ENCODE measurements at regions of chr10 and their contacts with region 1.

Region 1: GRCh38 chr10:47311932-47312662 is 10.2 kb upstream of the GDF2 start:
- DNase-seq: peak; percentile 93
- H3K4me3 Mint-ChIP-seq: no peak overlapping the region
- H3K27ac Mint-ChIP-seq: peak overlapping the region; percentile 41
- H3K4me1 Mint-ChIP-seq: peaks cover 32% of the 10 kb centered on the region
- H3K27me3 Mint-ChIP-seq: no peaks in the 10 kb centered on the region

Region 2: GRCh38 chr10:47031211-47031900 is 280.7 kb before region 1 on chr10:
- CTCF ChIA-PET with region 1: interaction called, 72 read pairs
- intact Hi-C with region 1: no loop called
- DNase-seq: no peak
- H3K4me3 Mint-ChIP-seq: no peak overlapping the region
- H3K27ac Mint-ChIP-seq: no peak overlapping the region
- H3K4me1 Mint-ChIP-seq: no peaks in the 10 kb centered on the region
- H3K27me3 Mint-ChIP-seq: no peaks in the 10 kb centered on the region

Region 3: DNA sequence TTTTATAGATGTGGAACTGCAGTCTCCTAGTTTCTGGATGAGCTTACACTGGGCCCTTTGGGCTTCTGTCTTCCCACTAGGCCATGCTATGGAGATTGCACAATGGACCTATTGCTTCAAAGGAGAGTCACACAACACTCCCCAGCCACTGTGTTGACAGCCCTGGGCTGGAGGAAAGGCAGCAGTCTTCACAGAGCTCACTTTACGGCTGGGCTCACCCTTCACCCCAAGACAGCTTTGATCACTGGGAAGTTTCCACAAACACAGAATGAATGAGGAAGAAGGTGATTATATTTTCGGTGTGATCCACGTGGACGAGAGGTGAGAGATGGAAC is 104.8 kb before region 1 on chr10:
- CTCF ChIA-PET with region 1: interaction called, 4 read pairs
- intact Hi-C with region 1: loop called (anchors 5 kb)
- DNase-seq: peak; percentile 44
- H3K4me3 Mint-ChIP-seq: peak overlapping the region; percentile 36
- H3K27ac Mint-ChIP-seq: peak overlapping the region; percentile 85
- H3K4me1 Mint-ChIP-seq: peaks cover 53% of the 10 kb centered on the region
- H3K27me3 Mint-ChIP-seq: no peaks in the 10 kb centered on the region

Region 4: GRCh38 chr10:47299611-47300428 is 12.3 kb before region 1 on chr10 and contains the start of gene GDF10:
- CTCF ChIA-PET with region 1: interaction called, 20 read pairs
- intact Hi-C with region 1: no loop called
- DNase-seq: no peak
- H3K4me3 Mint-ChIP-seq: peak within 1 kb of the TSS; percentile 66
- H3K27ac Mint-ChIP-seq: no peak within 1 kb of the TSS
- H3K4me1 Mint-ChIP-seq: peaks cover 12% of the 10 kb centered on the region
- H3K27me3 Mint-ChIP-seq: peaks cover 9% of the 10 kb centered on the region
- total RNA-seq, gene GDF10: 0.12 to 0.19 TPM

Region 5: DNA sequence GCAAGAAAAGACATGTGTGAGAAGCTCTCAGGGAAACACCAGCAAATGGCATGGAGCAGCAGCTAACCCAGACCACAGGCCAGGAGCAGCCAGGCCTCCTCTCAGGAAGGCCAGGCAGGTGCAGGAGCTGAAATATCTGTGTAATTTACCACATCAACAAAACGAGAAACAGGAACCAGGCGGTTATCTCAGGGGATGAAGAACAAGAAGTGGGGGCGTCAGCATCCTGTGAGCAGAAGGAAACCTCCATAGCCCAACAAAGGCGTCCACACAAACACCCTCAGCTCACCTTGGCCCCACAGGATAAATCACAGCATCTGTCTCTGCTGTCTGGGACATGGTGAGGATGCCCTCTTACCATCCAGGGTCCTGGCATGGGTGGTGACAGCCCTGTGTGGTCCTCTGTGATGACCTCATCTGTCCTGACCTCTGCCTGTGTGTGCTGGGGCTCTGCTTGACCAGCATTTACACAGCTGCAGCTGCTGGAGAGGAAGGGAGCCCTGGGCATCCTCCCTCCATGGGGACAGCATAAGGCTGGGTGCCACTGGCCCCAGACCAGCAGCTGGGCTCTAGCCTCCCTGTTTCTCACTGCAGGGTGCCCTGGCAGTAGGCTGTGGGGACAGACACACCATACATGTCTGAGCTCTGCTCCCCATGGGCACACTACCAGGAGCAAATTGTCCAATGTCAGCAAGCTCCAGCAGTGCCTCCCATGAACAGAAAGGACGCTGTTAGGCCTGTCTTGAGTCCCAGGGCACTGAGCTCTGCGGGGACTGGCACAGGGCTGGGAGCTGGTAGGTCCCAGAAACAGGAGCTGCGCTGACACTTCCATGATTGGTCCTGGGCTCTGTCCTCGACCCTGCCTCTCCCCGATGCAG is 137.2 kb after region 1 on chr10:
- CTCF ChIA-PET with region 1: no interaction called
- intact Hi-C with region 1: no loop called
- DNase-seq: no peak
- H3K4me3 Mint-ChIP-seq: no peak overlapping the region
- H3K27ac Mint-ChIP-seq: no peak overlapping the region
- H3K4me1 Mint-ChIP-seq: peaks cover 12% of the 10 kb centered on the region
- H3K27me3 Mint-ChIP-seq: no peaks in the 10 kb centered on the region

Region 6: DNA sequence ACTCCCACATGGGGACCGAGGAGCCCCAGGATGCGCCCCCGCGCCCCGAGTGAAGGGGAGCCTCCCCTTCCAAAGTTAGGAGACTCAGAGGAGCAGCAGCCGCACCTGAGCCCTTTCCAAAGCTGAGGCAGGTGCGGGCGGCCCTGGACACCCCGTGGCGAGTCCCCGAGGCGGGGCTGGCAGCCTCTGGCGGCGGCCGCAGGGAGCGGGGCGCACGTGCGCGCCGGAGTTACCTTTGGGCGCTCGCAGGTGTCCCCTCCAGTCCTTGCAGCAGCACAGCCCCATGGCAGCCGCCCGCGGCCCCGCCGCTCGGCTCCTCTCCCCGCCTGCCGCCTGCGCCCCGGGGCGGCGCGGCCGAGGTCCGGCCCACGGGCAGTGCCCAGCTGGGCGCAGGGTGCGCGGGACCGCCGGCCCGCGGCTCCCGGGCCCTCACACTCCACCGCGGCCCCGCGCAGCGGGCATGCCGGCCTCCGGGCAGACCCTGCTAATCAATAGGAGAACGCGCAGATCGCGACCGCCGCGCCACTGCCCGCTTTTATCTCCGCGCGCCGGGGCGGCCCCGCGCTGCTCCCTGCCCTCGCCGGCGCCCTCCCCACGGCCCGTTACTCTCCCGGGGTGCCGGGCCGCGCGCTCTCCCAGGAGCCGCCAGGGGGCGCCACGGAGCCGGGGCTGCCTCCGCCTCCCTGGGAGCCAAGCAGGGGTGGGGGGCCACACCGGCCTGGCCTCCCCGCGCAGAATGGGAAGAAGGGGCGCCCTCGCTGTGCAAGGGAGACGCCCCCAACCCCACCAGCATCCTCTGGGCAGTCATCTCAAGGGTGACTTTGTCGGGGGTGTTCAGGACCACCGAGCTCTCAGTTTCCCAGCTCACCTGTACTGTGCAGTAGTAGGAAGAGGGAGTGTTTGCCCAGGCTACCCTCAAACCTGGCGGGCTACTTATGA is 1212.0 kb after region 1 on chr10:
- CTCF ChIA-PET with region 1: no interaction called
- intact Hi-C with region 1: no loop called
- DNase-seq: peak; percentile 16
- H3K4me3 Mint-ChIP-seq: no peak overlapping the region
- H3K27ac Mint-ChIP-seq: no peak overlapping the region
- H3K4me1 Mint-ChIP-seq: no peaks in the 10 kb centered on the region
- H3K27me3 Mint-ChIP-seq: peaks cover 48% of the 10 kb centered on the region